Common myeloid progenitor, CD34-positive (primary cell): ENCODE measurements at regions of chr1 and their contacts with region 1.

Region 1: DNA sequence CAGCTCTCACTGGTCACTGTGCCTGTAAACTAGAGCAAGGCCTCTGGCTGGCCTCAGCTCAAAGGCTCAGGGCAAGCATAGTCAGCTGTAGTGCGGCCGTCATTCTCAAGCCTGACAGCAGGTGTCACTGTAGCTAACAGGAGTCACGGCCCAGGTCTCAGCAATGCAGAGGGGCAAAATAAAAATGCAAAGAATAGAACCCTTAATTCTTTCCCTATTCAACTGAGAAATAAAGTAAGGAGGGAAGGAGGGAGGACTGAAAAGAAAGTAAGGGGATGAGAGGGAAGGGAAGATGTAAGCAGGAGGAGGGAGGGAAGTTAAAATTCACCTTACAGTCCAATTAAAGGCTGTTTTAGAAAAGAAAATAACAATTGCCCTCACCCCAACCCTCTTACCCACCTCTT is 106.1 kb downstream of the KIAA0319L start:
- DNase-seq: peak; percentile 63 to 81 (median 74)
- H3K4me3 ChIP-seq: no peak overlapping the region
- H3K27ac ChIP-seq: no peak overlapping the region
- H3K4me1 ChIP-seq: peaks cover 12 to 26% (median 16%) of the 10 kb centered on the region in 4 experiments
- H3K27me3 ChIP-seq: no peaks in the 10 kb centered on the region

Region 2: GRCh38 chr1:35461966-35462651 is 11.0 kb after region 1 on chr1:
- CTCF ChIA-PET with region 1: interaction called, 13 read pairs
- POLR2A ChIA-PET with region 1: no interaction called
- DNase-seq: no peak
- H3K4me3 ChIP-seq: no peak overlapping the region
- H3K27ac ChIP-seq: no peak overlapping the region
- H3K4me1 ChIP-seq: no peaks in the 10 kb centered on the region
- H3K27me3 ChIP-seq: no peaks in the 10 kb centered on the region

Region 3: GRCh38 chr1:35518183-35518582 is 67.1 kb after region 1 on chr1:
- CTCF ChIA-PET with region 1: interaction called, 10 read pairs
- POLR2A ChIA-PET with region 1: no interaction called
- DNase-seq: no peak
- H3K4me3 ChIP-seq: no peak overlapping the region
- H3K27ac ChIP-seq: no peak overlapping the region
- H3K4me1 ChIP-seq: no peaks in the 10 kb centered on the region
- H3K27me3 ChIP-seq: no peaks in the 10 kb centered on the region

Region 4: GRCh38 chr1:35544978-35545377 is 93.9 kb after region 1 on chr1:
- CTCF ChIA-PET with region 1: interaction called, 54 read pairs
- POLR2A ChIA-PET with region 1: no interaction called
- DNase-seq: peak; percentile 73 to 83 (median 80)
- H3K4me3 ChIP-seq: no peak overlapping the region
- H3K27ac ChIP-seq: no peak overlapping the region
- H3K4me1 ChIP-seq: peaks cover 0 to 7% (median 3%) of the 10 kb centered on the region in 4 experiments
- H3K27me3 ChIP-seq: no peaks in the 10 kb centered on the region

Region 5: GRCh38 chr1:35564037-35564883 is 113.1 kb after region 1 on chr1:
- CTCF ChIA-PET with region 1: interaction called, 38 read pairs
- POLR2A ChIA-PET with region 1: interaction called, 3 read pairs
- DNase-seq: peak; percentile 76 to 86 (median 77)
- H3K4me3 ChIP-seq: no peak overlapping the region
- H3K27ac ChIP-seq: no peak overlapping the region
- H3K4me1 ChIP-seq: peaks cover 0 to 24% (median 15%) of the 10 kb centered on the region in 4 experiments
- H3K27me3 ChIP-seq: no peaks in the 10 kb centered on the region

Region 6: GRCh38 chr1:35769188-35769758 is 318.1 kb after region 1 on chr1:
- CTCF ChIA-PET with region 1: interaction called, 15 read pairs
- POLR2A ChIA-PET with region 1: no interaction called
- DNase-seq: peak; percentile 92 to 94 (median 93)
- H3K4me3 ChIP-seq: peak overlapping the region; percentile 78 to 95 (median 88)
- H3K27ac ChIP-seq: peak overlapping the region; percentile 74 to 87
- H3K4me1 ChIP-seq: peaks cover under 1 to 14% (median 9%) of the 10 kb centered on the region in 4 experiments
- H3K27me3 ChIP-seq: no peaks in the 10 kb centered on the region